Right ventricle myocardium inferior (tissue), 1 donor: ENCODE measurements at regions of chr11 and their contacts with region 1.

Region 1: GRCh38 chr11:30358536-30358935 is 35.6 kb downstream of the ARL14EP start:
- DNase-seq: no peak
- ATAC-seq: peak; percentile 43

Region 2: DNA sequence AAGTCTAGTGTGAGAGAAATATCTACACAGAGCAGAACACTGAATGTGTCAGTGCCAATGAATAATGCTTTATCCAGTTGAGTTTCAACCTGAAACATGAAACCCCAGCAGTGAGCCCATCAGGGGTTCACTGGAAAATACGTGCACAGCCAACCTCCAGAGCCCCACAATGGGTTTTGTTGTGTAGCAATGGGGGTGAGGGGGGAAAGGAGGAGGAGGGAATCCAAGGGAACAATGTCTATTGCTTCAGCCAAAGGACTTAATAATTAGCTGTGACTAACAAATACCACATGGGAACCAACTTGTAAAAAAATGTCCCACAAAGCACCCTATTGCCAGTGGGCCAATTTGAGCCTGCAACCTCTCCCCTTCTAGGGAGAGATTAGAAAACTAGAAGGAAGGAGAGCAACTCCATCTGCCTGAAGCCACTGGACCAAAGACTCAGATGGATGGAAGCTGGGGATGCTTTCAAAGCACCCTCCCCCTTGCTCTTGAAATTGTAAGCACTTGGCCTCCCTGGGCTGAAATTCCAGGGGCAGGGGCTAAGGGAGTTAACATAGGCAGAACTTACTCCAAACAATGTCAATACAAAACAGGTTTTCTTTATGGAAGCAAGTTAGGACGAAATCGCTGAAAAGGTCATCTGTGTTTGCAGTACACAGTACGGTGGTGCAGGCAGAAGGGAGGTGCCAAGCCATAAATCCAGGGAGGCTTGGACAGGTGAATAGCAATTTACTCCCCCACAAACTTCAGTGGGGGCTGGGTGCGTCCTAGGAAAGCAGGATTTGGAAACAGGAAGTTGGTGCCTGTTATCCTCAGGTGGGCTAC is 64.1 kb after region 1 on chr11:
- intact Hi-C with region 1: loop called (anchors 5 kb)
- DNase-seq: no peak
- ATAC-seq: no peak

Region 3: GRCh38 chr11:30710221-30710620 is 351.7 kb after region 1 on chr11:
- intact Hi-C with region 1: no loop called
- DNase-seq: no peak
- ATAC-seq: no peak